Ovary (tissue), 10 donors: ENCODE measurements at regions of chr20 and their contacts with region 1.

Region 1: GRCh38 chr20:60057123-60057801 is 99.0 kb downstream of the CDH26 start:
- DNase-seq: peak; percentile 28 to 69 (median 41)
- H3K4me3 ChIP-seq: no peak overlapping the region
- H3K27ac ChIP-seq: no peak overlapping the region
- H3K4me1 ChIP-seq: no peaks in the 10 kb centered on the region
- H3K27me3 ChIP-seq: no peaks in the 10 kb centered on the region
- CTCF ChIP-seq: peak; percentile 20 to 77 (median 49)
- EP300 ChIP-seq: no peak
- POLR2A ChIP-seq: no peak

Region 2: DNA sequence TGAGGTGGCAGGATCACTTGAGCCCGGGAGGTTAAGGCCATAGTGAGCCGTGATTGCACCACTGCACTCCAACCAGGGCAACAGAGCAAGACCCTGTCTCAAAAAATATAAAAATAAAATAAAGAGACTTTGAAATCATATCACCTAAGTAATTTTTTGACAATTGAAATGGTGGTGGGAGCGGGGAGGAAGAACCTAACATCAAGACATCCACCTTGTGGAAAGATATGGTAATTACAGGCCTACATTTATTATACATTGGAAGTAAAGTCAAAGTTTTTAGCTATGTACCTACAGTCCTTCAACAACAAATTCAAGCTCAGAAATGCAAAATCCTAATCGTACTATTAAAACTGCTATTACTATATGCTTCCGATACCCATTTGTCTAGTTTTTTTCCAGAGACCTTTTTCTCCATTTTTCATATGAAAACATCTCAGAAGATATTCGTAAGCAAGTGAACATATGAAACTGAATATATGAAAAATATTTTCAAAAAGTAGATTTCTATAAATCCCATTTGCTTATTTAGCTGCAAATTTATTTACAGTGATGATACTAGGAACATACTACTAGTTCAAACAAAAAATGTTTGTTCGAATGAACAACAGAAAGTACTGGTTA is 207.1 kb before region 1 on chr20:
- intact Hi-C with region 1: no loop called
- DNase-seq: no peak
- H3K4me3 ChIP-seq: no peak overlapping the region
- H3K27ac ChIP-seq: no peak overlapping the region
- H3K4me1 ChIP-seq: no peaks in the 10 kb centered on the region
- H3K27me3 ChIP-seq: no peaks in the 10 kb centered on the region
- CTCF ChIP-seq: peak; percentile 52 to 58 (median 57)
- EP300 ChIP-seq: no peak
- POLR2A ChIP-seq: no peak

Region 3: DNA sequence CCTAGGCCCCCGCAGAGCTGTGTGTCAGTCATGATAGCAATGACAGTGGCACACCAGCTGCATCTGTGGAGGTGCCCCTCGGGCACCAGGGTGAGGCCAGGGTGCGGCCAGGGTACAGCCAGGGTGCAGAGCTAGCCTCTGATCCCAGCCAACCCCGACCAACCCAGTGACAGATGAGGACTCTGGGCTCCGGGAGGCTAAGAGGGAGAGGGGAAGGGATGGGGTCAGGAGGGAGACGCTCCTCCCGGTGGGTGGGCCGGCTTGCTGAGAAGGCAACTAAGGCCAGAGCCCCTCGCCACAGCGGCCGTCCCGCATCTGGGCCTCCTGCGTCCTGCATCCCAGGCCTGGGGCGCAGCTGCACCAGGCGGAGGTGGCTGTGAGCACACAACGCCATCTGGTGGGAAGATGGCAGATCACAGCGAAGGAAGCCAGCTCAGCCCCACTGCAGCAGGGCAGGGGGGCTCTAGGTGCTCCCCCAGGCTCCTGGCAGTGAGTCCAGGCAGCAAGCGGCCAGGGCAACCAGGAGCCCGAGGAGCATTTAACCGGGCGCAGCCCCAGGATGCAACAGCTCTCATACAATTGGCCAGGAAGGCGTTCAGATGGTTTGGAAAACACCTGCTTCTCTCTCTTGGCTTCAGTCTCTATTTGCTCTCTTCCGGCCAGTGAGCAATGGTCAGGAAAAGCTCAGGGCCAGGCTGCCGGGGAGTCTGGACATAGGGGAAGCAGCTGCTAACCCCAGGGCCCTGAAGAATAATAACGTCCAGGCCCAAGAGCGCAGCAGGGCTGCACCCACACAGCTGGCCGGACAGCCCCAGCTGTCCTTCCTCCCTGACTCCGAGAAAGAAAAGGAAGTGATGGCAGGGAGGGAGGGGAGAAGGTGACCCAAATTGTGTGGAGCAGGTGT is 1839.0 kb after region 1 on chr20:
- intact Hi-C with region 1: loop called in 3 of 4 experiments (anchors 10 kb)
- DNase-seq: peak; percentile 55 to 73 (median 67)
- H3K4me3 ChIP-seq: no peak overlapping the region
- H3K27ac ChIP-seq: no peak overlapping the region
- H3K4me1 ChIP-seq: peaks cover 6% of the 10 kb centered on the region
- H3K27me3 ChIP-seq: no peaks in the 10 kb centered on the region
- CTCF ChIP-seq: peak; percentile 44 to 70 (median 50)
- EP300 ChIP-seq: no peak
- POLR2A ChIP-seq: no peak